ENCODE measurements at regions of chr12 and their contacts with region 1.

Region 1: GRCh38 chr12:31896514-31897039 is 62.6 kb upstream of the RESF1 start:
- DNase-seq: peak; percentile 90
- ATAC-seq: peak; percentile 97
- H3K4me3 Mint-ChIP-seq: peak overlapping the region; percentile 50
- H3K27ac Mint-ChIP-seq: peak overlapping the region; percentile 99
- H3K4me1 Mint-ChIP-seq: peaks cover 57% of the 10 kb centered on the region
- H3K27me3 Mint-ChIP-seq: no peaks in the 10 kb centered on the region

Region 2: DNA sequence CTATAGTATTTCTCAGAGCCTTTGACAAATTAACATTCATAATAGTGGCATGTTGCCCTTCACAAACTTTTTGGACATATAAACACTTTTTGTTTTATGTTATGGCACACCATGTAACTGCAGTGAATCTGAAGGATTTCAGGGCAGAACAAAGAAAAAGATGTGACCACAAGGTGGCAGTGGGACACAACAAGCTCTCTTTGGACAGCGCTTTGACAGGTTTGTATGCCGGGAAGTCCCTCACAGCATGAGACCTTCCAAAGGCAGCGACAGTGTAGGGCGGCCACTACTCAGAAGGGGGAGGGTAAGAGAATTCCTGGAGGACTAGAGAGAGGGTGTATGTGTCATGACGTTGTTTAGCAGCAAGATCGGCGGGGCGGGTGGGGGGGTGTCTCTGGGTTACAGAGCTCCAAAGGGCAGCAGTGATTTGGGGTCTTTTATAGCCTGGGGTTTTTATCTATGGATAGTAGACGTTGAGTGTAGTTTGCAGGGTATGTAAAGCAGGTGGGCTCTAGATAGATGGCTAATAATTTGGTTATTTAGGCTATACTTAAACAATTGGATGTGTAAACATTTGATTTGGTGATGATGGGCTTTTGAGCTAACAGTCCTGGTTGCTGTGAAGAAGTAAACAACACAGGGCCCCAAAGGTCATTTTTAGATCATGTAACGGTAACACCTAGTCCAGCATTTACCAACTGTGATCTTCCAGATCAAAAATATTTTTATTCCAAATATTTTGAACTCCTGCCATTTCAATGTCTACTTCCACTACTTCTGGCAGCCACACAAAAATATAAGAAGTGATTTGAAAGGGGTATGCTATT is 214.2 kb before region 1 on chr12:
- CTCF ChIA-PET with region 1: no interaction called
- POLR2A ChIA-PET with region 1: interaction called, 3 read pairs
- intact Hi-C with region 1: loop called in 1 of 2 experiments (anchors 5 kb)
- DNase-seq: peak; percentile 76
- ATAC-seq: peak; percentile 95
- H3K4me3 Mint-ChIP-seq: no peak overlapping the region
- H3K27ac Mint-ChIP-seq: peak overlapping the region; percentile 53
- H3K4me1 Mint-ChIP-seq: peaks cover 6% of the 10 kb centered on the region
- H3K27me3 Mint-ChIP-seq: no peaks in the 10 kb centered on the region

Region 3: GRCh38 chr12:31749024-31749704 is 147.4 kb before region 1 on chr12:
- CTCF ChIA-PET with region 1: no interaction called
- POLR2A ChIA-PET with region 1: no interaction called
- intact Hi-C with region 1: loop called in 1 of 2 experiments (anchors 1 kb)
- DNase-seq: peak; percentile 81
- ATAC-seq: peak; percentile 92
- H3K4me3 Mint-ChIP-seq: peak overlapping the region; percentile 9
- H3K27ac Mint-ChIP-seq: peak overlapping the region; percentile 28
- H3K4me1 Mint-ChIP-seq: peaks cover 55% of the 10 kb centered on the region
- H3K27me3 Mint-ChIP-seq: no peaks in the 10 kb centered on the region

Region 4: GRCh38 chr12:31928246-31929026 is 31.9 kb after region 1 on chr12:
- CTCF ChIA-PET with region 1: interaction called, 3 read pairs
- POLR2A ChIA-PET with region 1: interaction called, 6 read pairs
- intact Hi-C with region 1: loop called in 1 of 2 experiments (anchors 1 kb)
- DNase-seq: peak; percentile 31
- ATAC-seq: peak; percentile 72
- H3K4me3 Mint-ChIP-seq: peak overlapping the region; percentile 66
- H3K27ac Mint-ChIP-seq: peak overlapping the region; percentile 95
- H3K4me1 Mint-ChIP-seq: peaks cover 42% of the 10 kb centered on the region
- H3K27me3 Mint-ChIP-seq: no peaks in the 10 kb centered on the region

Region 5: DNA sequence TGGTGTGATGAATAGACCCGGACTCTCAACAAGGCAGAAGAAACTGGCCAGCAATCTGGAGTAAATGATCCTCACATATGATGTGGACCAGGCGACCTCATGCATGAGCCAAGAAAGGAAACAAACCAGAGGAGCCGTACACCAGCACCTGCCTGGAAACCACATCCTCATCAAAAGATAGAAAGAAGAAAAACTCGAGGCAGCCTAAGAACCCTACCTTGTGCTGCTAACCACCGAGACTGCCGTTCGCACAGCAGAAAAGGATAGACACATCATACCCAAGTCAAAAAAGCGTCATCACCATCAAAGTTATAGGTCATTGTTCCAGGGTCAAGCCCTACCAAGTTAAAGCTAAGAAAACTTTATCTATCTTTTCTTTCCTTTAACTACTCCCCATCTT is 129.3 kb after region 1 on chr12:
- CTCF ChIA-PET with region 1: no interaction called
- POLR2A ChIA-PET with region 1: no interaction called
- intact Hi-C with region 1: loop called in 1 of 2 experiments (anchors 1 kb)
- DNase-seq: peak; percentile 78
- ATAC-seq: peak; percentile 99
- H3K4me3 Mint-ChIP-seq: peak overlapping the region; percentile 40
- H3K27ac Mint-ChIP-seq: peak overlapping the region; percentile 78
- H3K4me1 Mint-ChIP-seq: peaks cover 29% of the 10 kb centered on the region
- H3K27me3 Mint-ChIP-seq: no peaks in the 10 kb centered on the region

Region 6: GRCh38 chr12:32467959-32468863 is 571.6 kb after region 1 on chr12:
- CTCF ChIA-PET with region 1: no interaction called
- POLR2A ChIA-PET with region 1: no interaction called
- intact Hi-C with region 1: no loop called
- DNase-seq: no peak
- ATAC-seq: no peak
- H3K4me3 Mint-ChIP-seq: no peak overlapping the region
- H3K27ac Mint-ChIP-seq: no peak overlapping the region
- H3K4me1 Mint-ChIP-seq: no peaks in the 10 kb centered on the region
- H3K27me3 Mint-ChIP-seq: no peaks in the 10 kb centered on the region

Region 7: GRCh38 chr12:33192226-33192625 is 1295.6 kb after region 1 on chr12:
- CTCF ChIA-PET with region 1: no interaction called
- POLR2A ChIA-PET with region 1: no interaction called
- intact Hi-C with region 1: no loop called
- DNase-seq: no peak
- ATAC-seq: no peak
- H3K4me3 Mint-ChIP-seq: no peak overlapping the region
- H3K27ac Mint-ChIP-seq: no peak overlapping the region
- H3K4me1 Mint-ChIP-seq: no peaks in the 10 kb centered on the region
- H3K27me3 Mint-ChIP-seq: no peaks in the 10 kb centered on the region